ENCODE measurements at regions of chr14 and their contacts with region 1.

Region 1: DNA sequence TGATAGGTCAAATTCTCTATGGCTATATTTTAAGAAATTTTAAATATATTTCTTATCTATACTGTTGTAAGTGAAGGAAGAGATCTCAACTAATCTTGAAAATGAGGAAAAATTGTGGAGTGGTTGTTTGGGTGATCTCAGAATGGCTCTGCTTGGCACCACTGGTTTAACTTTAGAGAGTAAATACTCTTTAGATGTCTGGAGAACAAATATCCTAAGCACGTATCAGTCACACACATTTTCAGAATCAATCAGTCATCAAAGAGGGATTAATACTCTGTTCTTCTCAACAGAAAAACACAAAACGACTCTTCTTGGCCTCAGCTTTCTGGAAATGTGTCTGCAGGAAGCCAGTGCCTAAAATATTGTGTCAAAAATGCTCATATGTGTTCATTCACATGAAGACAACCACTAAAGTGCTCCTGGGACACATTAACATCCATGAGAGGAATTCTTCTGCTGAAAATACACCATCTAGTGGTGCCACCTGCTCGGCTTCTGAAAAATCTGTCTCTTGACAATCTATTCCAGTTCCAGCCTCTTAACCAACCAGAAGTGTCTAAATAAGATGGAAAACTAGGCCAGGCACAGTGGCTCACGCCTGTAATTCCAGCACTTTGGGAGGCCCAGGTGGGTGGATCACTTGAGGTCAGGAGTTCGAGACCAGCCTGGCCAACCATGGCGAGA is 81.1 kb upstream of the CCDC198 start:
- DNase-seq: no peak
- ATAC-seq: no peak
- H3K4me3 ChIP-seq: no peak overlapping the region
- H3K27ac ChIP-seq: no peak overlapping the region
- H3K4me1 ChIP-seq: no peaks in the 10 kb centered on the region
- H3K27me3 ChIP-seq: no peaks in the 10 kb centered on the region
- CTCF ChIP-seq: peak; percentile 43

Region 2: DNA sequence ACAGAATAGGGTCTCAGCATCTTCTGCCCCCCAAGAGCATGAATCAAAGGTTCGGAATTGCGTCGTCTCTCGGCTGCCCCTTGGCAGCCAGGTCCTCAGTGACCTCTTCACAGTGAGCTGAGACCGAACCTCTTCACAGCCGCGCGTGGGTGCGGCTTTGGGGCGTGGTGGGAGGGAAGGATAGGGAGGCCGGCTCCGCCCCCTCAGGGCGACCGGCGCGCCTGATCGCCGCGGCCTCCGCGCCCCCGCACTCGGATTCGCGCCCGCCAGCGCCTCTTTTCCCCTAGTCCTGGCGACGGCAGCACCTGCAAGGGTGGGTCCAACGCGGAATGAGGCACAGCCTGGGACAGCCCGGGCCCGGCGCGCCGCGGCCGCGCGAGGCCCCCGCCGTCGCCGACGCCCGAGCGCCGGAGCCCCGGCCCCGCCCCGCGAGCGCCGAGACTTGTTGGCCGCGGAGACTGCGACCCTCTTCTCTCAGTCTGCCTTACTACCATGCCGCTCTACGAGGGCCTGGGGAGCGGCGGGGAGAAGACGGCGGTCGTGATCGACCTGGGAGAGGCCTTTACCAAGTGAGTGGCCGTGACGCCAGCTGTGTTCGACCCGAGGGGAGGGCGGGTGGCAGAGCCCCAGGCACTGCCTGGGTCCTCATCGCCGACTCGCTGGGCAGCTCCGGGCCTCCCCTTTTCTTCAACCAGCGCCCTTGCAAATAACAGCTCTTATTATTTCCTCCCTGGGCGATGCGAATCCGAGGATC is 625.1 kb after region 1 on chr14 and contains the start of gene ACTR10:
- CTCF ChIA-PET with region 1: no interaction called
- POLR2A ChIA-PET with region 1: interaction called, 10 read pairs
- in situ Hi-C with region 1: no loop called
- intact Hi-C with region 1: no loop called
- DNase-seq: peak; percentile 20
- ATAC-seq: peak; percentile 99
- H3K4me3 ChIP-seq: peak within 1 kb of the TSS; percentile 96 to 97
- H3K27ac ChIP-seq: peak within 1 kb of the TSS; percentile 90
- H3K4me1 ChIP-seq: peaks cover 4% of the 10 kb centered on the region; the same call in 1 of the 2 replicates
- H3K27me3 ChIP-seq: no peaks in the 10 kb centered on the region
- CTCF ChIP-seq: no peak
- total RNA-seq, gene ACTR10: 34.9 TPM

Measured in Panc1 (cell line).